Calu3 (cell line): ENCODE measurements at regions of chr1 and their contacts with region 1.

Region 1: GRCh38 chr1:233656032-233656620 is 42.2 kb downstream of the KCNK1 start:
- DNase-seq: peak; percentile 39
- H3K4me3 Mint-ChIP-seq: peak overlapping the region; percentile 70
- H3K27ac Mint-ChIP-seq: peak overlapping the region; percentile 99
- H3K4me1 Mint-ChIP-seq: peaks cover 73% of the 10 kb centered on the region
- H3K27me3 Mint-ChIP-seq: no peaks in the 10 kb centered on the region
- CTCF ChIP-seq: no peak

Region 2: DNA sequence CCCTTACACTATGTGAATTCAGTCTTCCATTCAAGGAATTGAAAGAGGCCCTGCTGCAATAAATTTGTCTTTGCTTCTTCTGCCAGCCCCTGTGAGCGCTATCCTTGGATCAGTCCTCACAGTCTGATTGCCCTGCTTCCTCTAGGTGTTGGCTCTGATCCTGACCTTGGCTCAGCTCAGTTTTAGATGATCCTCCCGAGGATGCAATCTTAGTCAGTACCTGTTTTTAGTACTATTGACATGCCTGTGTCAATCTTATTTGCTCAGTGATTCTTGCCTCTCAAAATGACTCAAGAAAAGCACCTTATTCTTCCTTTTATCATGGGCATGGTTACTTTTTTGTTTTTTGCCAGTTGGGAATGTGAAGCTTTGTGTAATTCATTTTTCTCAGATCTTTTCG is 143.6 kb before region 1 on chr1:
- CTCF ChIA-PET with region 1: no interaction called
- intact Hi-C with region 1: no loop called
- DNase-seq: no peak
- H3K4me3 Mint-ChIP-seq: no peak overlapping the region
- H3K27ac Mint-ChIP-seq: no peak overlapping the region
- H3K4me1 Mint-ChIP-seq: no peaks in the 10 kb centered on the region
- H3K27me3 Mint-ChIP-seq: no peaks in the 10 kb centered on the region
- CTCF ChIP-seq: no peak

Region 3: DNA sequence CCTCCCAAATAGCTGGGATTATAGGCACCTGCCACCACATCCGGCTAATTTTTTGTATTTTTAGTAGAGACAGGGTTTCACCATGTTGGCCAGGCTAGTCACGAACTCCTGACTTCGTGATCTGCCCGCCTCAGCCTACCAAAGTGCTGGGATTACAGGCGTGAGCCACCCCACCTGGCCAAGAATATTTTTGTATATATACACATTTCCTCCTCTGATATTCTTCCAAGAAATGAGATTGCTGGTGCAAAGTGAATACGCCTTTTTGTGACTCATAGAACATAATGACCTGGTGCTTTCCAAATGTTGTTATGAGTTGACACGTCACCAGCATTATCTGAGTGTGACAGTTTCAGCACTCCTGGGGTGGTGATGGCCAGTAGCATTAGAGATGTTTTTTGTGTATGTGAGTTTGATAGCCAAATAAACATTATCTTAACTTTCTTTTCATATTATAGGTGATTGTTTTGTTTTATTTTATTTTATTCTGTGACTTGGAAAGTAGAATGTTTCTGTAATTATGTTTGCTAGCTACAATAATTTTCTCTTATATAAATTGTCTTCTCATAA is 12.7 kb after region 1 on chr1:
- CTCF ChIA-PET with region 1: interaction called, 7 read pairs
- intact Hi-C with region 1: loop called (anchors 2 kb)
- DNase-seq: peak; percentile 62
- H3K4me3 Mint-ChIP-seq: no peak overlapping the region
- H3K27ac Mint-ChIP-seq: peak overlapping the region; percentile 88
- H3K4me1 Mint-ChIP-seq: peaks cover 67% of the 10 kb centered on the region
- H3K27me3 Mint-ChIP-seq: no peaks in the 10 kb centered on the region
- CTCF ChIP-seq: no peak

Region 4: DNA sequence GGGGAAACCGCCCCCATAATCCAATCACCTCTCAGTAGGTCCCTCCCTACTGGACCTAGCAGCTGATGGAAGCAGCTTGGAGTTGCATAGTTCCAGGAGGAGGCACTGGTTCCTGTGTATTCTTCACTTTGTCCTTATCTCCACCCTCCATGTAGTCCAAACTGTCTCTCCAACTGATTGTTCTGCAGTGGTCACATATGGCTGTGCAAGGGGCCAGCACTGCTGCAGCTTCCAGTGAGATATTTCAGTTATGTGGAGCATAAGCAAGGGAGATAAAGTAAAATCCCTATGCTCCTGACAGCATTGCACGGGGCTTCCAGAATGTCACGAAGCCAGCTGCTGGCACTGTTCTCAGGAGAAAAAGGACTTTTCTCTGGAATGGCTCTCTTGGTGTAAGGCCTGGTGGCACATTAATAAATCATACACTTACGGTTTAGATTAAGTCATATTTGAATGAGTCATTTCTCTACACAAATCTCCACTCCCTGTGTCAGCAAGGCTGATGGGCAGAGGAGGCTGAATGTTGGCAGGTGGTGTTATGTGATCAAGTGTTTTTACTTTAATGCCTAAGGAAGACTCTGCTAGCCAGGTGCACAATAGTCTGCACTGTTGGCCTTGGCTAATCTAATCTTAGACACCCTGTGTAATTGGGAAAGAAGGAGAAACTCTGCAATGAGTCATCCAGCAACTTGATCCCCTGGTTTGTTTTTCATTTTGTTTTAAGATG is 51.2 kb after region 1 on chr1:
- CTCF ChIA-PET with region 1: interaction called, 3 read pairs
- intact Hi-C with region 1: loop called (anchors 2 kb)
- DNase-seq: peak; percentile 80
- H3K4me3 Mint-ChIP-seq: peak overlapping the region; percentile 65
- H3K27ac Mint-ChIP-seq: peak overlapping the region; percentile 95
- H3K4me1 Mint-ChIP-seq: peaks cover 61% of the 10 kb centered on the region
- H3K27me3 Mint-ChIP-seq: no peaks in the 10 kb centered on the region
- CTCF ChIP-seq: no peak

Region 5: GRCh38 chr1:233759605-233760004 is 103.5 kb after region 1 on chr1:
- CTCF ChIA-PET with region 1: no interaction called
- intact Hi-C with region 1: no loop called
- DNase-seq: no peak
- H3K4me3 Mint-ChIP-seq: no peak overlapping the region
- H3K27ac Mint-ChIP-seq: no peak overlapping the region
- H3K4me1 Mint-ChIP-seq: peaks cover 10% of the 10 kb centered on the region
- H3K27me3 Mint-ChIP-seq: no peaks in the 10 kb centered on the region
- CTCF ChIP-seq: no peak

Region 6: GRCh38 chr1:233951804-233952203 is 295.7 kb after region 1 on chr1:
- CTCF ChIA-PET with region 1: no interaction called
- intact Hi-C with region 1: no loop called
- DNase-seq: no peak
- H3K4me3 Mint-ChIP-seq: no peak overlapping the region
- H3K27ac Mint-ChIP-seq: no peak overlapping the region
- H3K4me1 Mint-ChIP-seq: peaks cover under 1% of the 10 kb centered on the region
- H3K27me3 Mint-ChIP-seq: no peaks in the 10 kb centered on the region
- CTCF ChIP-seq: no peak